ENCODE measurements at regions of chr3 and their contacts with region 1.

Region 1: GRCh38 chr3:9390265-9390888 is 7.0 kb upstream of the SETD5 start:
- DNase-seq: no peak

Region 2: GRCh38 chr3:9428411-9428810 is 38.0 kb after region 1 on chr3:
- intact Hi-C with region 1: loop called (anchors 5 to 10 kb)
- DNase-seq: no peak

Measured in posterior vena cava (tissue), 2 donors.